A549 (cell line): ENCODE measurements at regions of chr1 and their contacts with region 1.

Region 1: GRCh38 chr1:231590453-231591198 is 36.0 kb upstream of the DISC1 start:
- DNase-seq: peak; percentile 35 to 83
- ATAC-seq: peak; percentile 99
- H3K4me3 ChIP-seq: no peak overlapping the region
- H3K27ac ChIP-seq: peak overlapping the region in 1 of 2 experiments; percentile 36; a peak in 2 of 6 replicates
- H3K4me1 ChIP-seq: no peaks in the 10 kb centered on the region
- CTCF ChIP-seq: peak; percentile 93
- EP300 ChIP-seq: no peak
- POLR2A ChIP-seq: no peak
- RAD21 ChIP-seq: peak; percentile 92 to 95

Region 2: DNA sequence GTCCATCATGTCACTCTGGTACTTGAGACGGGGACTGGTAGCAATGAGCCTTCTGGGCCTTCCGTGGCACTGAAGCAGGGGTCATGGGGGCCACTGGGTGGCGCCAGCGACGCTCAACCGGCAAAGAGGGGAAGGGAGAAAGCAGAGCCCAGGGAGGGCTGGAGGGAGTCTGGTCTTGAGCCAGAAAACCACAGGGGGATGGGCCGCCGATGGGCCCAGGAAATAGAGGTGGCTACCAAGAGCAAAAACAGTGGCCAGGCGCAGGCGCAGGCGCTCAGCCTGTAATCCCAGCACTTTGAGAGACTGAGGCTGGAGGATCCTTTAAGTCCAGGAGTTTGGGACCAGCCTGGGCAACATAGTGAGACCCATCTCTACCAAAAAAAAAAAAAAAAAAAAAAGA is 274.7 kb before region 1 on chr1:
- CTCF ChIA-PET with region 1: interaction called, 11 read pairs
- POLR2A ChIA-PET with region 1: no interaction called
- DNase-seq: peak; percentile 33 to 58
- ATAC-seq: peak; percentile 79 to 98
- H3K4me3 ChIP-seq: no peak overlapping the region
- H3K27ac ChIP-seq: no peak overlapping the region
- H3K4me1 ChIP-seq: no peaks in the 10 kb centered on the region
- CTCF ChIP-seq: peak; percentile 61
- EP300 ChIP-seq: no peak
- POLR2A ChIP-seq: no peak
- RAD21 ChIP-seq: peak; percentile 57 to 73

Region 3: DNA sequence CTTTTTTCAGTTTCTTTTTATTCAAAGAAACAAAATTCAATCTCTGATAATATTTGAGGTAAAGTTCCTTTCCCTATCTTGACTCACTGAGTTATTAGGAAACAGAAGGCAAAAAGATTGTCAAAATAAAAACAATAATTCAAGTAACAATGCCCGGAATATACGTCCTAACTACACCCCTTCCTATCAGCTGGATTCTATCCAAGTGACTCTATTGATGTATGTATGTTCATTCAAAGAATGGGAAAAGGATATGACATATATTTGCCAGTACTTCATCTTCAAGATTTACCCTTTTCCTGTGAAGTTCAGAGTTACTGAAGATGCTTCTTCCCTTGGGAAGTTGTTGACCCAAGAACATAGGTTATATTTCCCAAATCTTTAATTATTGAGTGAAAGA is 238.8 kb before region 1 on chr1:
- CTCF ChIA-PET with region 1: interaction called, 54 read pairs
- POLR2A ChIA-PET with region 1: no interaction called
- DNase-seq: no peak
- ATAC-seq: no peak
- H3K4me3 ChIP-seq: no peak overlapping the region
- H3K27ac ChIP-seq: no peak overlapping the region
- H3K4me1 ChIP-seq: peaks cover 13% of the 10 kb centered on the region
- CTCF ChIP-seq: no peak
- EP300 ChIP-seq: no peak
- POLR2A ChIP-seq: no peak
- RAD21 ChIP-seq: no peak

Region 4: GRCh38 chr1:231357831-231358354 is 232.7 kb before region 1 on chr1:
- CTCF ChIA-PET with region 1: interaction called, 54 read pairs
- POLR2A ChIA-PET with region 1: no interaction called
- DNase-seq: peak; percentile 52 to 73
- ATAC-seq: peak; percentile 85 to 86
- H3K4me3 ChIP-seq: no peak overlapping the region
- H3K27ac ChIP-seq: peak overlapping the region; percentile 37 to 69; a peak in 5 of 6 replicates
- H3K4me1 ChIP-seq: peaks cover 38% of the 10 kb centered on the region
- CTCF ChIP-seq: peak; percentile 92
- EP300 ChIP-seq: no peak
- POLR2A ChIP-seq: no peak
- RAD21 ChIP-seq: peak; percentile 95 to 96

Region 5: DNA sequence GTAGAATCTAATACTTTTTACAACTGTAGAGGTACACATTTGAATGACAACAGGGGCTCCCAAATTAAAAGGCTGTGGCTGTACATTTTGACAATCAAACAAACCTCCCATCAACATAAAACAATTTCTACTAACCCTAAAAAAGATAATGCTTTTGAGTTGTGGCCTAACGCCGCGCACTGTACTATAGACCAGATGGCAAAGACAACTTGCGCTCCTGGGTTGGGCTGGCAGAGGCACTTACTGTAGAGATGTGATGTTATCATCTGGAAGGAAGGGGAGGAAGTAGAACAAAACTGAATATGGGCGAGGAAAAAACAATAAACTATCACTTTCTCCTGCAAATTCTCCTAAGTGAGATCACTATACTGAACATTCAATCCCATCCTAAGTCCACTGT is 226.4 kb before region 1 on chr1:
- CTCF ChIA-PET with region 1: interaction called, 54 read pairs
- POLR2A ChIA-PET with region 1: no interaction called
- DNase-seq: no peak
- ATAC-seq: no peak
- H3K4me3 ChIP-seq: no peak overlapping the region
- H3K27ac ChIP-seq: no peak overlapping the region
- H3K4me1 ChIP-seq: peaks cover 11% of the 10 kb centered on the region
- CTCF ChIP-seq: no peak
- EP300 ChIP-seq: no peak
- POLR2A ChIP-seq: no peak
- RAD21 ChIP-seq: no peak

Region 6: GRCh38 chr1:231603598-231604275 is 13.1 kb after region 1 on chr1:
- CTCF ChIA-PET with region 1: interaction called, 12 read pairs
- POLR2A ChIA-PET with region 1: no interaction called
- DNase-seq: peak; percentile 57 to 79
- ATAC-seq: peak; percentile 86 to 91
- H3K4me3 ChIP-seq: peak overlapping the region; percentile 48
- H3K27ac ChIP-seq: peak overlapping the region; percentile 30 to 67; a peak in 5 of 6 replicates
- H3K4me1 ChIP-seq: 0 out of 3 replicates have a peak, but pooled peaks cover 4% of the 10 kb centered on the region
- CTCF ChIP-seq: peak; percentile 92
- EP300 ChIP-seq: no peak
- POLR2A ChIP-seq: no peak
- RAD21 ChIP-seq: peak; percentile 85 to 93